ENCODE measurements at regions of chr11 and their contacts with region 1.

Region 1: DNA sequence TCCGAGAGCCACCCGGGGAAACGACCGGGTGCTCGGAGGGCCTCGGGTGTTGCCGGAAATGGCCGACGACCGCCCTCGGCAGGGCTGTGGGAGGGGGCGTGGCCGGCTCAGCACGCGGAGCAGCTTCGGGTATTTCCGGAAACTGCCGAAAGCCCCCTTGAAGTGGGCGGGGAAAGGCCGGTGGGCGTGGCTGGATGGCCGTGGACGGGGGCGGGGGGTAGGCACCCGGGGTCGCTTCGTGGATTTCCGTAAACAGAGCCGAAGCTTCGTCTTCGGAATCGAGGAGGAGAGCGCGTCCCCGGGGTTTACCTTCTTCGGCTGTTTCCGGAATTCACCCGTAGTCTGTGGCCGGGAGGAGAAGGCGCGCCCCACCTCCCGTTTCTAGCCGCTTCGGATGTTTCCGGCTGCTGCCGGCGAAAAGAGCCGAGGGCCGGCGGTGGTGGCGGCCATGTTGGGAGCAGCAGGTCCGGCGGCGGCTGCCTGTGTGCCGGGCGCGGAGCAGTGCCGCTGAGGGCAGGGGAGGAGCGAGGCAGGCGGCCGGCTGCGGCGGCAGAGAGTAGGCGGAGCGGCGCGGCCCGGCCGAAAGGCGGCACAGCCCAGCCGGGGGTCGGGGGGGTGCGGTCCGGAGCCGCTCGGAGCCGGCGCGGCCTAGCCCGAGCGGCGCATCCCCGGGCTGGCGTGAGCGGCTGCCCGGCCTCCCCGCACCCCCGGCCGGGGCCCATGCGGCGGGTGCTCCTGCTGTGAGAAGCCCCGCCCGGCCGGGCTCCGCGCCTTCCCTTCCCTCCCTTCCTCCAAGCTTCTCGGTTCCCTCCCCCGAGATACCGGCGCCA is at the start of gene MARK2:
- DNase-seq: peak; percentile 99
- H3K4me3 ChIP-seq: peak within 1 kb of the TSS; percentile 91
- CTCF ChIP-seq: no peak

Region 2: GRCh38 chr11:63289658-63290057 is 549.2 kb before region 1 on chr11:
- in situ Hi-C with region 1: no loop called
- DNase-seq: no peak
- H3K4me3 ChIP-seq: no peak overlapping the region
- CTCF ChIP-seq: no peak

Region 3: GRCh38 chr11:63892228-63892627 is 53.3 kb after region 1 on chr11:
- in situ Hi-C with region 1: loop called (anchors 10 kb)
- DNase-seq: peak; percentile 49
- H3K4me3 ChIP-seq: no peak overlapping the region
- CTCF ChIP-seq: no peak

Measured in astrocyte of the spinal cord (primary cell).